ENCODE measurements at regions of chr2 and their contacts with region 1.

Region 1: GRCh38 chr2:69073928-69074570 is 61.1 kb downstream of the ANTXR1 start:
- DNase-seq: no peak
- ATAC-seq: no peak

Region 2: DNA sequence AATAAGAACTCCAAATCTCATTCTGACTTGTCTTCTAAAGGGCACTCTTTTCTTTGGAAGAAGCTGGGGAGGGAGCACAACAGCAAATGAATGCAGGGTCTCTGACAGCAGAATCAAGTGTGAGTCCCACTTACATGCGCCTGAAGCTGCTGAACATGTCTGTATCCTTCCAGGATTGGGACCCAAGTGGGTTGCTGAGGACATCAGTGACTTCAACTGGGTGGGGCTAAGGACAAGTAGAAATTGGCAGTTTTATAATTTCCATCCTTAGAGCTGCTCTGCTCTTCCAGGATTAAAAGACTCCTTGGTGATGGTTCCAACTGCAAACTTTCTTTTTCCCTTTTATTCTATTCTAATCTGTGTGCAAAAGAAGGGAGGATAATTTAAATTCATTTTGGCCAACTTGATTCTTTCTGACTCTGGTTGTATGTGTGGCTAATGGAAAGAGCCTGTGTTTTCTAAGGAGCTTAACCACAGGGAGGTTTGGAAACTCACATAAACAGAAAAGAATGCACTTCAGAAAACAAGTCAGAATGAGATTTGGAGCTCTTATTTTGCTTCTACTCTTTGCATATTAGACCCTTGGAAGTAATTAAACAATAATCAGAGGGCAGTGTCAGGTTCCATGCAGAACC is 40.5 kb before region 1 on chr2:
- intact Hi-C with region 1: loop called (anchors 2 kb)
- DNase-seq: no peak
- ATAC-seq: peak; percentile 69

Region 3: DNA sequence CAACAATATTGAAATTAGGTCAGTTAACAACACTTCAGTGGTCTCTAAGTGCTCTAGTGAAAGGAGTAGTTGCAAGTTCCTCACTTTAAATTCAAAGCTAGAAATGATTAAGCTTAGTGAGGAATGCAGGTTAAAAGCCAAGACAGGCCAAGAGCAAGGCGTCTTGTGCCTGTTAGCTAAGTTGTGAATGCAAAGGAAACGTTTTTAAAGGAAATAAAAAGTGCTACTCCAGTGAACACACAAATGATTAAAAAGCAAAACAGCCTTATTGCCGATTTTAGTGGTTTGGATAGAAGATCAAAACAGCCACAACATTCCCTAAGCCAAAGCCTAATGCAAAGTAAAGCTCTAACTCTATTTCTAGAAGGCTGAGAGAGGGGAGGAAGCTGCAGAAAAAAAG is 16.4 kb before region 1 on chr2:
- intact Hi-C with region 1: loop called (anchors 1 kb)
- DNase-seq: no peak
- ATAC-seq: no peak

Region 4: DNA sequence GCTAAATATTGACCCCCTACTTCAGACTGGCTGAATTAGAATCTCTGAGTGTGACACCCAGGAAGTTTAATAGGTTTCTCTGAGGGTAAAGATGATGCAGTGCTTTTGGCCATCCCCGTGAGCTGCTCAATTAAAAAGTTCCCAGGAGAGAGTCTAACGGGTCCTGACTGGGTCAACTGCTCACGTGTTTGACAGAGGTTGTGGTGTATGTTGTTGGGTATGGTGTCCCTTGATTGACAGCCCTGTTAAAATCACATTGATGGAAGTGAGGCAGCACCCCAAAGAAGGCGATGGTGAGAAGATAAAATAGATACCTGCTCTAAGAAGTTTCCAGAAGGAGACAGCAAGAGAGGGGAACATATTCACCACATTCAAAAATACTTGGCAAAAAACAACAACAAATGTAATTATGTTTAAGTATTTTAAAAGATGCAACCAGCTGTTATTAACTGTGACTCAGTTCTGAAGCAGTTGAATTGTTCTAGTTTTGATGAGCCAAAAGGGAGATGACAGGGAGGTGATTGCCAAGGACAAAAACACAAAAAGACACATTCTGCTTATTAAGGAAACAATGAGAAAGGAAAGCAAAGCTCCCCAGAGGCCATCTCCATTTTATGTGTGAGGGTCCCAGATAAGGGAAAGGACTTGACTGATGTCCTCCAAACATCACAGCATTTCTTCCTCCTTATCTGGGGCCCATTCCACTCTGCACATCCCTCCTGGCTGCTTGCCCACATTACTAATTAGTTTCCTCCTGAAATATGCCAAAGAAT is 743.9 kb after region 1 on chr2:
- intact Hi-C with region 1: no loop called
- DNase-seq: no peak
- ATAC-seq: no peak

Measured in sciatic nerve (tissue), 2 donors.